BJ (cell line): ENCODE measurements at regions of chr10 and their contacts with region 1.

Region 1: DNA sequence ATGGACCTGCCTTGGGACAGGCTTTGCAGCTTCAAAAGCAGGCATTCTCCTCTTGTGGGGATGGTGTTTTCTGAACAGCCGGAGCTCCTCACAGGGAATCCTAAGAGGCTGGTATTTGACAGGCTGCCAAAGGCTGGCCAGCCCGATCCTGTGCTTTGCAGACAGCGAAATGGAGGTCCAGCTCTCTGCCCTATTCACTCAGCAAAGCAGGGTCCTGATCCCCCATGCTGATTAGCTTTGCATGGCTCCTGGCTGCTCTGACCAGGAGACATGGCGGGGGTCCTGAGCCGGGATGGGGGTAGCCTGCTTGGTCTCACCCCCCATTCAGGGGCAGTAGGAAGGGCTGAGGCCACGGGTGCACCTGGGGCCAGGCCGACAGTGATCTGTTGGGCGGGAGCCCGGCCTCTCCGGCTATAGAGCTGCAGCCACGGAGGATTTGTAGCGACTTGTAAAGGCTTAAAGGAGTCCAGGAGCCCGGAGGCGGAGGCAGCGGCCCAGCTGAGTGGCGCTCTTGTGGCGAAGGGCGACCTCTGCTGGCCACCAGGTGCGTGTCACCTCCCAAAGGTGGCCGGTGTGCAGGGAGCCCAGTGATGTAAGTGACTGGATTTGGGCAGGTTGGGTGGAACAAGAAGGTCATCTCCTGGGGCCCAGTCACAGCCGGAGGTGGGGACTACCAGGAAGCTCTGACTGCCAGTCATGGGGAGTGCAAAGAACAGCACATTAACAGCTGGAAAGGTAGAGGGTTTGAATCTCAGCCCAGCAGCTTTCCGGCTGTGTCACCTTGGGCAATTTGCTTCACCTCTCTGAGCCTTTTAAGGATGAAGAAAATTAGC is 126.5 kb downstream of the ZMIZ1 start:
- DNase-seq: no peak
- H3K4me3 ChIP-seq: no peak overlapping the region
- H3K27me3 ChIP-seq: no peaks in the 10 kb centered on the region
- CTCF ChIP-seq: peak; percentile 90

Region 2: DNA sequence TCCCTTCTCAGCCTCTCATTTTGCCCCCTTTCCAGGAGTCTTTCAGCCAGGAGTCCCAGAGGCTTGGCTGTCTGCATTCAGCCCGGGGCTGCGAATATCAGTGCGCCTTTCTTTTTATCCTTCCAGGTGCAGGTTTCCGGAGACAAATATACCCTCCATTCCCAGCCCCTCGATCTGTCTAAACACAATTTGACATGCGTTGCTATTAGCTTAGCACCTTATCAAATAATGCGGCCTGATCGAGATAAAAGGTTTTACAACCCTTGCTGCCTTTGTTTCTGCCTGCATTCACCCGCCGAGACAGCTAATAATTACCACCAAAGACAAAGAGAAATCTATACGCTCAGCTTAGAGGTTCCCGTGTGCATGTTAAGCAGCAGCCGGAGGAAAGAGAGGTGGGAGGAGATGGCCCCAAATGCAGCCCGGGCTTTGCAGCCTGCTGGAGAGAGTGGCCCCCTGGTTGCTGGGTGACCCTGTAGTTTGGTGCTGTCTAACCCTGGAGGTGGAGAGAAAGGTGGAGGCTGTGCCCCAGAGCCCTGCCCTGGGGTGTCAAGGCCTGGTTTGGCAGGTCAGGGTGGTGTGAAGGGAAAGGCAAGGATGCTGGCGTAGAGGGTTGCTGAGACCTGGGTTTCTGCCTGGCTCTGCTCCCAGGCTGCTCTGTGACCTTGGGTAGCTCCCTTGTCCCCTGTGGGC is 976.4 kb before region 1 on chr10:
- CTCF ChIA-PET with region 1: interaction called, 15 read pairs
- POLR2A ChIA-PET with region 1: no interaction called
- DNase-seq: no peak
- H3K4me3 ChIP-seq: no peak overlapping the region
- H3K27me3 ChIP-seq: no peaks in the 10 kb centered on the region
- CTCF ChIP-seq: no peak

Region 3: DNA sequence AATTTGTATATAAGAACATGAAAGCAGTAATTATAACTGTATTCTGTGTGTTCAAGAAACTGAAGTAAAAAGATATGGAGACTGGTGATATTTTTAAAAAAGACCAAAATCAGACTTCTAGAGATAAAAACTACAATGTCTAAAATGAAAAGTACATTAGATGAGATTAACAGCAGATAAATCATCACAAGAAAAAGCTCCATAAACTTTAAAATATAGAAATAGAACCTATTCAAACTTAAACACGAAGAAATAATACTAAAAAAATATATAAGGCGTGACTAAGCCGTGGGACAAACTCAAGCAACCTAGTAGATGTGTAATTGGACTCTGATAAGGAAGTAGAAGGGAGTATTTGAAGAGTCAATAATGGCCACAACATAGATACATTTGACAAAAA is 315.7 kb before region 1 on chr10:
- CTCF ChIA-PET with region 1: no interaction called
- POLR2A ChIA-PET with region 1: no interaction called
- DNase-seq: no peak
- H3K4me3 ChIP-seq: no peak overlapping the region
- H3K27me3 ChIP-seq: peaks cover 2% of the 10 kb centered on the region
- CTCF ChIP-seq: no peak

Region 4: DNA sequence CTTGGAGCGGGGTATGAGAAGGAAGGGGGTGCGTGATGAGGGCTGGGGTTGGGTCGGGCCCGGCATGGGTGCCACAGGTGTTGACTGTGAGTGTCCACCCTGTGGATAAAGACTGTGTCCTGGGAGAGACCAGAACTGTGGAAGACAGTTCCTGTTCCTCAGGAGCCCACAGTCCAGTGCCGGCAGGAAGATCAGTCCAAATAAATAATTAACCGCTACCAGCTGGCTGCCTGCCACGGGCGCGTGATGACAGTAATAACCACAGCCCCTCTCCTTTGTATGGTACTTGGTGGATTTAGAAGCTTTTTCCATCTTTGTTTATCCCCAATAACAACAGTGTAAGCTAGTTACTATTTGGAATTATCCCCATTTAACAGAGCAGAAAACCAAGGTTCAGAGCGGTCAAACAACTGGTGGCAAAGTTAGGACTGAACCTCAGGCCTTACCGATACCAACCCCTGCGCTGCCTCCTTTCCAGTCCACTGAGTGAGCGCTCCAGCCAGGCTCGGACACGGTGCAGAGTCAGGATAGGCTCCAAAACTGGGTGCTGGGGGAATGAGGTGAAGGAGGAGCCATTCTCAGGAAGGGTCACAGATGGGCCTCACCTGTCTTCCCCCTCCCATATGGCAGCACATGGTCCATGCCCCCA is 121.4 kb before region 1 on chr10:
- CTCF ChIA-PET with region 1: interaction called, 31 read pairs
- POLR2A ChIA-PET with region 1: interaction called, 11 read pairs
- DNase-seq: no peak
- H3K4me3 ChIP-seq: no peak overlapping the region
- H3K27me3 ChIP-seq: no peaks in the 10 kb centered on the region
- CTCF ChIP-seq: no peak

Region 5: GRCh38 chr10:79113827-79114226 is 81.5 kb before region 1 on chr10:
- CTCF ChIA-PET with region 1: interaction called, 10 read pairs
- POLR2A ChIA-PET with region 1: no interaction called
- DNase-seq: no peak
- H3K4me3 ChIP-seq: no peak overlapping the region
- H3K27me3 ChIP-seq: no peaks in the 10 kb centered on the region
- CTCF ChIP-seq: no peak

Region 6: GRCh38 chr10:79176949-79177602 is 18.2 kb before region 1 on chr10:
- CTCF ChIA-PET with region 1: interaction called, 15 read pairs
- POLR2A ChIA-PET with region 1: no interaction called
- DNase-seq: no peak
- H3K4me3 ChIP-seq: no peak overlapping the region
- H3K27me3 ChIP-seq: no peaks in the 10 kb centered on the region
- CTCF ChIP-seq: no peak

Region 7: GRCh38 chr10:79331709-79332108 is 136.4 kb after region 1 on chr10:
- CTCF ChIA-PET with region 1: no interaction called
- POLR2A ChIA-PET with region 1: no interaction called
- DNase-seq: peak; percentile 65
- H3K4me3 ChIP-seq: no peak overlapping the region
- H3K27me3 ChIP-seq: no peaks in the 10 kb centered on the region
- CTCF ChIP-seq: no peak

Region 8: GRCh38 chr10:79483948-79484347 is 288.6 kb after region 1 on chr10:
- CTCF ChIA-PET with region 1: no interaction called
- POLR2A ChIA-PET with region 1: no interaction called
- DNase-seq: peak; percentile 92
- H3K4me3 ChIP-seq: no peak overlapping the region
- H3K27me3 ChIP-seq: no peaks in the 10 kb centered on the region
- CTCF ChIP-seq: no peak